CD8-positive, alpha-beta T cell (primary cell): ENCODE measurements at regions of chr2 and their contacts with region 1.

Region 1: GRCh38 chr2:188524519-188525113 is 232.9 kb downstream of the GULP1 start:
- DNase-seq: peak in 2 of 9 experiments; percentile 27 to 37
- ATAC-seq: peak; percentile 48
- H3K4me3 ChIP-seq: no peak overlapping the region
- H3K4me3 Mint-ChIP-seq: no peak overlapping the region
- H3K27ac ChIP-seq: no peak overlapping the region
- H3K27ac Mint-ChIP-seq: no peak overlapping the region
- H3K4me1 ChIP-seq: no peaks in the 10 kb centered on the region
- H3K4me1 Mint-ChIP-seq: no peaks in the 10 kb centered on the region
- H3K27me3 ChIP-seq: no peaks in the 10 kb centered on the region
- H3K27me3 Mint-ChIP-seq: no peaks in the 10 kb centered on the region
- CTCF ChIP-seq: peak; percentile 63

Region 2: DNA sequence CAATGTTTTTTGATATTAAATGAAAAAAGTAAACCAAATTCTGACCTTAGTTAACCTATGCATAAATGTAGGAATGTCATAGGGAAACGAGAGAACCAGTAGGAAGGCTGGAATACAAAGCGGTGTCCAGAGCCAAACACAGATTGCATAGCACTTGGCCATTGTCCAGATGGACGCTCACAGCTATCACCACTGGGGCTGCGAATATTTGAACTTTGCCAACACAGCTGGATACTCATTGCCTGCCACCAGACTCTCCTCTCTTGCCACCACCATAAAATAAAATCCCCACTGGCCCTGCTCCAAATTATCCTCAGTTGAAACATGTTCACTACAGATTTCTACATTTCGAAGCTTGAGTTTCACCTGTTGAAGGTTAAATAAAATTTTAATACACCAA is 392.2 kb before region 1 on chr2:
- CTCF ChIA-PET with region 1: no interaction called
- POLR2A ChIA-PET with region 1: no interaction called
- intact Hi-C with region 1: no loop called
- DNase-seq: no peak
- ATAC-seq: no peak
- H3K4me3 ChIP-seq: no peak overlapping the region
- H3K4me3 Mint-ChIP-seq: no peak overlapping the region
- H3K27ac ChIP-seq: no peak overlapping the region
- H3K27ac Mint-ChIP-seq: no peak overlapping the region
- H3K4me1 ChIP-seq: no peaks in the 10 kb centered on the region
- H3K4me1 Mint-ChIP-seq: no peaks in the 10 kb centered on the region
- H3K27me3 ChIP-seq: no peaks in the 10 kb centered on the region
- H3K27me3 Mint-ChIP-seq: no peaks in the 10 kb centered on the region
- CTCF ChIP-seq: no peak

Region 3: DNA sequence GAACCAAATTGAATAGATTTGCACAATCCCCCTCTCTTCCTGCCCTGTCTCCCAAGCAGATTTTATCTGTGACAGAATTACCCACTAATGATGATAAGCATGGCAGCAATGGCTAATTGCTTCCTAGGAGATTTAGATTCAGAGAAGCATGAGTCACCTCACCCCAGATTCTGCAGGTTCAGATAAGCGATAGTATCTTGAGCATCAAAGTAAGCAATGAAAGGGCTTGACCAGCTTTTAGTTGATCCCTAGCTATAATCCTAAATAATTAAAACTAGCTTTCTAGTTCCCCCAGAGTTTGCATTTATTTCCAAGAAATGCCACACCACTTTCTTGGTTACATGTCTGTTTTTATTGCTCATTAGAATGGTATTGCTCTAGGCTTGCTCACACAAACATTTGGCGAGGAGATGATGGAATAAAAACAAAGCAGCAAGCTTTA is 28.6 kb before region 1 on chr2:
- CTCF ChIA-PET with region 1: no interaction called
- POLR2A ChIA-PET with region 1: no interaction called
- intact Hi-C with region 1: no loop called
- DNase-seq: no peak
- ATAC-seq: no peak
- H3K4me3 ChIP-seq: no peak overlapping the region
- H3K4me3 Mint-ChIP-seq: no peak overlapping the region
- H3K27ac ChIP-seq: no peak overlapping the region
- H3K27ac Mint-ChIP-seq: no peak overlapping the region
- H3K4me1 ChIP-seq: no peaks in the 10 kb centered on the region
- H3K4me1 Mint-ChIP-seq: no peaks in the 10 kb centered on the region
- H3K27me3 ChIP-seq: no peaks in the 10 kb centered on the region
- H3K27me3 Mint-ChIP-seq: no peaks in the 10 kb centered on the region
- CTCF ChIP-seq: no peak

Region 4: DNA sequence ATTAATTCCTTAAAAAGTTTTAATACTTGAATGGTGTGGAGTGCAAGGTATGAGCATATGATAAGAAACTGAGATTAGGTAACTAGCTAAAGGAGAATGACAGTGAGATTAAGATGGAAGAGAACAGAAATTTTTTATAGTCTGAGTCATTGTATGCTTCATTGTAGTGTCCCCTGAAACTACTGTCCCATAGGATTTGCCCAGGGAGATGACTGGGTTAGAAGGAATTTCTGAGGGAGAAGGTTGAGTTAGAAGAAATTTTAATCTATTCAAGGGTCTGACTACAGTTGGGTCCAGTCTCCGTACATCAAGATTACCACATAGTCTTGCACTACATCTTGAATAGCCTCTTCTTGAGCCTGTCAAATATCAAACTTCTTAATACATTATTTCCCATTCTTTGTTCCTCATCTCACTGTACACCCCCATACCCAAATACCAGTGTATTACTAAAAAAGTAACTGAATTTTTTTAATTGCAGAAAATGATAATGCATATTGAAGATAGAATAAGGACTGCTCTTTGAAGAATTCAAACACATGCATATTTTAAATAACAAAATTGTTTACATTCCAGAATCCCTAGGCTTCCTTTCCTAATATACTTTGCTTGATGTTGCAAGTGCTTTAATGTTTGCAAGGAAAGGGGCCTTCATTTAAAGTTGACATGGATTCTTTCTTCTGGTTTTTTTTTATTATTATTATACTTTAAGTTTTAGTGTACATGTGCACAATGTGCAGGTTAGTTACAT is 135.2 kb after region 1 on chr2:
- CTCF ChIA-PET with region 1: no interaction called
- POLR2A ChIA-PET with region 1: no interaction called
- intact Hi-C with region 1: no loop called
- DNase-seq: no peak
- ATAC-seq: no peak
- H3K4me3 ChIP-seq: no peak overlapping the region
- H3K4me3 Mint-ChIP-seq: no peak overlapping the region
- H3K27ac ChIP-seq: no peak overlapping the region
- H3K27ac Mint-ChIP-seq: no peak overlapping the region
- H3K4me1 ChIP-seq: no peaks in the 10 kb centered on the region
- H3K4me1 Mint-ChIP-seq: no peaks in the 10 kb centered on the region
- H3K27me3 ChIP-seq: no peaks in the 10 kb centered on the region
- H3K27me3 Mint-ChIP-seq: no peaks in the 10 kb centered on the region
- CTCF ChIP-seq: no peak

Region 5: DNA sequence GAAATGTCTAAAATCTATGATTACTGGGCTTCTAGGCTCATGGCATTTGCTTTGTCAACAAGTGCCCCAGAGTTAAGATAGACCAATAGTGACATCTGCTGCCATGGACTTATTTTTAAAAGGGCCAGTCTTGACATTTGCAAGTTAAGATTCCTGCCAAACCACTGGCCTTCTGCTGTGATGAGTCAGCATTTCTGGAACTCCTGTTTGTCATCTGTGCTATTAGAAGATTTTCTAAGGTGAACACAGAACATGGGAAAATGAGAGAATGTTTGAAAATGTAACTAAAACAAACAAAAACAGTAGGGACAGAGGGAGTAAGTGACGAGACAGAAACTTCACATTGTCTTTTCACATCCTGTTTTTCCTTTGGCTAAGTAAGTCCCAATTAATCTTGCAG is 822.9 kb after region 1 on chr2:
- CTCF ChIA-PET with region 1: no interaction called
- POLR2A ChIA-PET with region 1: no interaction called
- intact Hi-C with region 1: loop called (anchors 5 kb)
- DNase-seq: peak in 3 of 9 experiments; percentile 9 to 61 (median 52)
- ATAC-seq: peak; percentile 38
- H3K4me3 ChIP-seq: no peak overlapping the region
- H3K4me3 Mint-ChIP-seq: no peak overlapping the region
- H3K27ac ChIP-seq: no peak overlapping the region
- H3K27ac Mint-ChIP-seq: no peak overlapping the region
- H3K4me1 ChIP-seq: peaks cover 3% of the 10 kb centered on the region
- H3K4me1 Mint-ChIP-seq: peaks cover 16% of the 10 kb centered on the region
- H3K27me3 ChIP-seq: no peaks in the 10 kb centered on the region
- H3K27me3 Mint-ChIP-seq: no peaks in the 10 kb centered on the region
- CTCF ChIP-seq: peak; percentile 33